ENCODE measurements at regions of chr3 and their contacts with region 1.

Region 1: DNA sequence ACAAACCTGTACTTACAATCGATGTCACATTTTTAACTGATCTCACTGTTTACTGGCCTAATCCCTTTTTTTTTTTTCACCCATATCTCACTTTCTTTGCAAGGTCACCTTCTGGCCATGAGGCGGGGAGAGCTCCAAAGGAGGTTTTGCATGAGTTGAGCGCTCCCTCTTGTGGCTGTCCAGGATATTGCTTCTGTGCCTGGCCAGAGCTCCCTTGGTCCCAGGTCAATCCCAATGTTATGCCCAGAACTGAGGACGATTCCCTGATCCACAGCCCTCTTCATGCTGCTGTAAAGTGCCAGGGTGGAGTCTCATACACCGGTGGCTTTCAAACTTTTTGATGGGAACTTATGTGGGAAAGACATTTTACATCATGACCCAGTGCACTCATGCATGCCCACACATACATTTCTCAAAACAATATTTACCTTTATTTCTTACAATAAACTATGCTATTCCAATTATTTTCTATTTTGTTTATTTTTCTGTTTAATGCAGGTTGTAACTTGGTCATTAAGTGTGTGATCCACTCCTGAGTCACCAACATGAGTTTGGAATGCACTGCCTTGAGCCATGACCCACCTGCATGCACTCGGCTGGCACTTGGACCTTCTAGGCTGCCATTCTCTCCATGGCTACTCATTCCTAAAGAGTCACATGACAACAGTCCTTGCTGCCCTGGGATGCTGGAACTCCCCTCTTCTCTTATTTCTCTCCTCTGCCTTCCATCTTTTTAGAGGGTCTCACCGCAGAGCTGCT is 9.6 kb upstream of the SST start:
- DNase-seq: peak; percentile 76 to 82
- H3K4me3 ChIP-seq: no peak overlapping the region
- H3K27ac ChIP-seq: no peak overlapping the region
- H3K4me1 ChIP-seq: no peaks in the 10 kb centered on the region
- H3K27me3 ChIP-seq: no peaks in the 10 kb centered on the region
- CTCF ChIP-seq: peak; percentile 81 to 99 (median 89)
- POLR2A ChIP-seq: no peak

Region 2: GRCh38 chr3:187227658-187228258 is 452.1 kb before region 1 on chr3:
- intact Hi-C with region 1: loop called (anchors 10 kb)
- DNase-seq: no peak
- H3K4me3 ChIP-seq: no peak overlapping the region
- H3K27ac ChIP-seq: no peak overlapping the region
- H3K4me1 ChIP-seq: no peaks in the 10 kb centered on the region
- H3K27me3 ChIP-seq: no peaks in the 10 kb centered on the region
- CTCF ChIP-seq: no peak
- POLR2A ChIP-seq: no peak

Region 3: DNA sequence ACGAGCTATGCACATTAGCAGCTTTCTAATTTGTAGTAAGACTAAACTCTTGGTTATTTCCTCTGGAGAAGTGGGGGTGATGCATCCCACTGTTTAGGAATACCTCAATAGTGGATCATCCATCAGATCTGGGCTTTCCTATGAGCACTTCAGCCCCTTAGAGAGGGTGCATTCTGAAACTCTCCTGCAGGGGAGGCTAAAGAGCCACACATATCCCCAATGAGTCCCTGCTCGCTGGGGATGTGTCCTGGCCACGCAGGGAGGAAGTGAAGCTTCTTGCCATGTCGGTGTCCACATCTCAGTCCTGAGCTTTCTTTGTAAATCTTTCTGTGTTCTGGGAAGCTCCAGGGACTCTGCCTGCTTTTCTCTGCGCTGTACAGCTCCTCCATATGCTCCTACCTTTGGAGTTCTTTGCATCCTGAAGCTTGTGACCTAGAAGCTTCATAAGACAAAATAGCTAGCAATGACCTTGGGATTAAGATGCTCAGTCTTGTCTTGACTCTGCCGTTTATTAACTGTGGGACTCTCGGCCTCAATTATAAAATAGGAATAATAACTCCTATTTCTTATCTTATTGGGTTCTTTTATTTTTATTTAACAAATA is 360.0 kb before region 1 on chr3:
- intact Hi-C with region 1: loop called (anchors 2 kb)
- DNase-seq: peak; percentile 68 to 70
- H3K4me3 ChIP-seq: no peak overlapping the region
- H3K27ac ChIP-seq: no peak overlapping the region
- H3K4me1 ChIP-seq: peaks cover 0 to 3% of the 10 kb centered on the region in 2 donors
- H3K27me3 ChIP-seq: no peaks in the 10 kb centered on the region
- CTCF ChIP-seq: peak; percentile 68 to 95 (median 92)
- POLR2A ChIP-seq: no peak